Dorsolateral prefrontal cortex (tissue), 120 donors: ENCODE measurements at regions of chr1 and their contacts with region 1.

Region 1: GRCh38 chr1:84506002-84506728 is at the starts of genes GNG5 and SPATA1:
- DNase-seq: peak; percentile 88 to 97 (median 94)
- H3K4me3 ChIP-seq: peak within 1 kb of the TSS; percentile 68 to 94 (median 84)
- H3K27ac ChIP-seq: peak within 1 kb of the TSS; percentile 10 to 97 (median 87)
- H3K27me3 ChIP-seq: no peaks in the 10 kb centered on the region
- CTCF ChIP-seq: peak in 24 of 56 donors; percentile 4 to 50 (median 18)
- total RNA-seq, gene GNG5: 8.0 to 50.7 (median 21.2) TPM
- total RNA-seq, gene SPATA1: 0.20 to 5.9 (median 1.9) TPM in 113 of 120 experiments, not detected in the others

Region 2: GRCh38 chr1:84478876-84479868 is 27.0 kb before region 1 on chr1 and contains the start of gene RPF1:
- intact Hi-C with region 1: loop called in 1 of 2 experiments (anchors 2 kb)
- DNase-seq: peak; percentile 52 to 79 (median 76)
- H3K4me3 ChIP-seq: peak within 1 kb of the TSS; percentile 58 to 96 (median 85)
- H3K27ac ChIP-seq: peak within 1 kb of the TSS in 58 of 59 donors; percentile 14 to 94 (median 80)
- H3K27me3 ChIP-seq: peaks cover 0 to 37% (median 6%) of the 10 kb centered on the region in 45 donors
- CTCF ChIP-seq: peak in 21 of 56 donors; percentile 5 to 43 (median 23)
- total RNA-seq, gene RPF1: 11.8 to 23.8 (median 18.5) TPM

Region 3: GRCh38 chr1:84573967-84574842 is 68.0 kb after region 1 on chr1 and contains the start of gene CTBS:
- intact Hi-C with region 1: loop called in 1 of 2 experiments (anchors 2 kb)
- DNase-seq: peak; percentile 64 to 85 (median 78)
- H3K4me3 ChIP-seq: peak within 1 kb of the TSS; percentile 50 to 95 (median 78)
- H3K27ac ChIP-seq: peak within 1 kb of the TSS; percentile 54 to 98 (median 93)
- H3K27me3 ChIP-seq: no peaks in the 10 kb centered on the region
- CTCF ChIP-seq: peak in 7 of 56 donors; percentile 3 to 47 (median 5)
- total RNA-seq, gene CTBS: 4.5 to 15.6 (median 8.4) TPM

Region 4: GRCh38 chr1:85179522-85179921 is 673.4 kb after region 1 on chr1:
- intact Hi-C with region 1: no loop called
- DNase-seq: no peak
- H3K4me3 ChIP-seq: no peak overlapping the region
- H3K27ac ChIP-seq: no peak overlapping the region
- H3K27me3 ChIP-seq: no peaks in the 10 kb centered on the region
- CTCF ChIP-seq: no peak